ENCODE measurements at regions of chr16 and their contacts with region 1.

Region 1: DNA sequence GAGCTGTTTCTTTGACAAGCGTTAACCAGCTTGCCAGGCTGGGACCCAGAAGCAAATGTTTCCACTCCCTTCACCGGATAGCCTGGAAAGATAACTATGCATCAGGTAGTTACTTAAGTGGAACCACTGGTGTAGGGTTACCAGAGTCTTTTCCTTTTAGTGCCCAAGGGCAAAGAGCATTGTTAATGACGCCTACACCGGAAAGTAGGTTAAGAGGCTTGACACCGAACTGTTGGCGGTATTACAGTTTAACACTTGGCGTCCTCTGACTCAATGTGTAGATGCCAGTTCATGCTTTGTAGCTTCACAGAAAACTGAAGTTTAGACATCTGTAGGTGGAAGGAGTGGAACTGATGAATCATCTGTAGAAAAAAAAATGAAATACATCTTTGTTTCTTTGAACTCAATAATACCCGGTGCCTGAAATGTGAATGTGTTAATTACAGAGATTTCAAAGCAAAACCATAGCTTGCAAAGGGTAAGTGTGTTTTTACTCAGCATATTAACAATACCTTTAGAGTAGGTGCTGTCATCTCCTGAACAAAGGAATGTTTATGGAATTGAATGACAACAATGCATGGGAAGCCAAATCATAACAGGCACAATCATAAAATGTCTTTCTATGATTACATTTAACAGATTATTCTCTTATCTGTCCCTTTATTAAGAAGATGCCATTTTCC is 426.7 kb upstream of the SALL1 start:
- DNase-seq: peak; percentile 20
- ATAC-seq: peak; percentile 88
- H3K4me3 ChIP-seq: no peak overlapping the region
- H3K27ac ChIP-seq: no peak overlapping the region
- H3K4me1 ChIP-seq: no peaks in the 10 kb centered on the region
- H3K27me3 ChIP-seq: no peaks in the 10 kb centered on the region
- CTCF ChIP-seq: no peak
- EP300 ChIP-seq: peak; percentile 71 to 83; a peak in 2 of 4 replicates
- POLR2A ChIP-seq: no peak
- RAD21 ChIP-seq: no peak

Region 2: GRCh38 chr16:51408357-51408756 is 169.4 kb before region 1 on chr16:
- CTCF ChIA-PET with region 1: no interaction called
- POLR2A ChIA-PET with region 1: no interaction called
- RAD21 ChIA-PET with region 1: no interaction called
- SMC1A ChIA-PET with region 1: interaction called, 5 read pairs
- in situ Hi-C with region 1: no loop called
- intact Hi-C with region 1: loop called (anchors 10 kb)
- DNase-seq: no peak
- ATAC-seq: peak; percentile 68
- H3K4me3 ChIP-seq: no peak overlapping the region
- H3K27ac ChIP-seq: no peak overlapping the region
- H3K4me1 ChIP-seq: no peaks in the 10 kb centered on the region
- H3K27me3 ChIP-seq: no peaks in the 10 kb centered on the region
- CTCF ChIP-seq: no peak
- EP300 ChIP-seq: no peak
- POLR2A ChIP-seq: no peak
- RAD21 ChIP-seq: no peak

Region 3: GRCh38 chr16:51542981-51543815 is 34.6 kb before region 1 on chr16:
- CTCF ChIA-PET with region 1: no interaction called
- POLR2A ChIA-PET with region 1: no interaction called
- RAD21 ChIA-PET with region 1: no interaction called
- SMC1A ChIA-PET with region 1: no interaction called
- in situ Hi-C with region 1: no loop called
- intact Hi-C with region 1: no loop called
- DNase-seq: no peak
- ATAC-seq: no peak
- H3K4me3 ChIP-seq: no peak overlapping the region
- H3K27ac ChIP-seq: no peak overlapping the region
- H3K4me1 ChIP-seq: no peaks in the 10 kb centered on the region
- H3K27me3 ChIP-seq: no peaks in the 10 kb centered on the region
- CTCF ChIP-seq: no peak
- EP300 ChIP-seq: no peak
- POLR2A ChIP-seq: no peak
- RAD21 ChIP-seq: no peak

Region 4: GRCh38 chr16:51556694-51557340 is 20.9 kb before region 1 on chr16:
- CTCF ChIA-PET with region 1: interaction called, 4 read pairs
- POLR2A ChIA-PET with region 1: interaction called, 7 read pairs
- RAD21 ChIA-PET with region 1: interaction called, 15 read pairs
- SMC1A ChIA-PET with region 1: interaction called, 34 read pairs
- in situ Hi-C with region 1: no loop called
- intact Hi-C with region 1: no loop called
- DNase-seq: no peak
- ATAC-seq: no peak; the same call in 2 of the 3 replicates
- H3K4me3 ChIP-seq: no peak overlapping the region
- H3K27ac ChIP-seq: no peak overlapping the region
- H3K4me1 ChIP-seq: no peaks in the 10 kb centered on the region
- H3K27me3 ChIP-seq: no peaks in the 10 kb centered on the region; a peak in 1 of 4 replicates
- CTCF ChIP-seq: no peak
- EP300 ChIP-seq: no peak
- POLR2A ChIP-seq: no peak
- RAD21 ChIP-seq: no peak

Region 5: DNA sequence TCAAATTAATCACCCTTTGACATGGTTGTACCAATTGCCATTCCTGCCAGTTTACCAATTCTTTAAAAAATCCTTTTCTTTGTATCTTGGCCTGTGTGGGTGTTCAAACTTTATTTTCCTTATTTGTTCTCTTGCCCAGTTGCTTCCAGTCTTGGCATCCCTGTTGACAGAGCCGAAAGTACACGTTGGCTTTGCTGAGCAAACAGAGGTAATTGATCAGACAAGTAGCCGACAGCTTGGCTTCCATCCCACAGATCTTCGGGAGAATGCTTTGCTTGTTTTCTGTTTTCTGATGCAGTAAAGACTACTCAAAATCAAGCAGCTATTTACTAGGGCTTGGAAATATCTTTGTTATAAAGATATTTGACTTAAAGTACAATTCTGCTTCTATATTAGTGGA is 80.1 kb after region 1 on chr16:
- CTCF ChIA-PET with region 1: no interaction called
- POLR2A ChIA-PET with region 1: no interaction called
- RAD21 ChIA-PET with region 1: no interaction called
- SMC1A ChIA-PET with region 1: no interaction called
- in situ Hi-C with region 1: no loop called
- intact Hi-C with region 1: no loop called
- DNase-seq: no peak
- ATAC-seq: no peak
- H3K4me3 ChIP-seq: no peak overlapping the region
- H3K27ac ChIP-seq: no peak overlapping the region
- H3K4me1 ChIP-seq: no peaks in the 10 kb centered on the region
- H3K27me3 ChIP-seq: no peaks in the 10 kb centered on the region
- CTCF ChIP-seq: no peak
- EP300 ChIP-seq: no peak
- POLR2A ChIP-seq: no peak
- RAD21 ChIP-seq: no peak